ENCODE measurements at regions of chr5 and their contacts with region 1.

Region 1: GRCh38 chr5:153974131-153974812 is 64.4 kb downstream of the FAM114A2 start:
- DNase-seq: peak; percentile 38 to 60 (median 48)
- ATAC-seq: peak; percentile 78
- H3K4me3 ChIP-seq: no peak overlapping the region
- H3K27ac ChIP-seq: no peak overlapping the region
- H3K4me1 ChIP-seq: peaks cover 0 to 27% of the 10 kb centered on the region in 2 experiments; a peak in 3 of 5 replicates
- H3K27me3 ChIP-seq: peaks cover 1 to 3% of the 10 kb centered on the region in 2 experiments; a peak in 2 of 5 replicates
- CTCF ChIP-seq: peak; percentile 62 to 92 (median 76)
- EP300 ChIP-seq: no peak
- POLR2A ChIP-seq: no peak
- RAD21 ChIP-seq: peak; percentile 85 to 90

Region 2: DNA sequence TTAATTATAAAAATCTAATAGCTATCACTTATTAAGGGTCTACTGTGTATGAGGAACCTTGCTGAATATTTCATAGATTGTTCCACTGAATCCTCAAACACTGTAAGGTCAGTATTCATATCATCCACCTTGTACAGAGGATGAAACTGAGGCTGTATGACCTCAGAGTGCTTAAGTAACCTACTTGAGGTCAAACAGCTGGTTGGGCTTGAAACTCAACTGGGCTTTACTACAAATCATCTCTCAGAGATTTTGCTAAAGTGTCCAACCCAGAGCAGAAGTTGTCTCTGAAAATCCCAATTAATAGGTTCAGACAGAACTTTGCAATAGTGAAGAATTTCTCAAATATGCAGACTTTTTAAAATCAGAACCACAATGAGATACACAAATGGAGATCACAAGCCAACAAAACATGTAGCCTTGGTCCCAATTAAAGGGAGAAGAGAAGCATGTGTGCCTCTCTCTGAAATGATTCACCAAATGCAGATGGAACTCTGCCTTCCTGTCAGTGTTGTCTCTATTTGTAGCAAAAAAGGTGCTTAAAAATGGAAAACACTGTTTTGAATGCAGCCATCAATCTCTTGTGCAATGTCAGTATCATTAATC is 67.0 kb before region 1 on chr5:
- CTCF ChIA-PET with region 1: no interaction called
- POLR2A ChIA-PET with region 1: no interaction called
- in situ Hi-C with region 1: no loop called
- intact Hi-C with region 1: no loop called
- DNase-seq: no peak
- ATAC-seq: no peak
- H3K4me3 ChIP-seq: no peak overlapping the region
- H3K27ac ChIP-seq: no peak overlapping the region
- H3K4me1 ChIP-seq: no peaks in the 10 kb centered on the region
- H3K27me3 ChIP-seq: no peaks in the 10 kb centered on the region
- CTCF ChIP-seq: no peak
- EP300 ChIP-seq: no peak
- POLR2A ChIP-seq: no peak
- RAD21 ChIP-seq: no peak

Region 3: DNA sequence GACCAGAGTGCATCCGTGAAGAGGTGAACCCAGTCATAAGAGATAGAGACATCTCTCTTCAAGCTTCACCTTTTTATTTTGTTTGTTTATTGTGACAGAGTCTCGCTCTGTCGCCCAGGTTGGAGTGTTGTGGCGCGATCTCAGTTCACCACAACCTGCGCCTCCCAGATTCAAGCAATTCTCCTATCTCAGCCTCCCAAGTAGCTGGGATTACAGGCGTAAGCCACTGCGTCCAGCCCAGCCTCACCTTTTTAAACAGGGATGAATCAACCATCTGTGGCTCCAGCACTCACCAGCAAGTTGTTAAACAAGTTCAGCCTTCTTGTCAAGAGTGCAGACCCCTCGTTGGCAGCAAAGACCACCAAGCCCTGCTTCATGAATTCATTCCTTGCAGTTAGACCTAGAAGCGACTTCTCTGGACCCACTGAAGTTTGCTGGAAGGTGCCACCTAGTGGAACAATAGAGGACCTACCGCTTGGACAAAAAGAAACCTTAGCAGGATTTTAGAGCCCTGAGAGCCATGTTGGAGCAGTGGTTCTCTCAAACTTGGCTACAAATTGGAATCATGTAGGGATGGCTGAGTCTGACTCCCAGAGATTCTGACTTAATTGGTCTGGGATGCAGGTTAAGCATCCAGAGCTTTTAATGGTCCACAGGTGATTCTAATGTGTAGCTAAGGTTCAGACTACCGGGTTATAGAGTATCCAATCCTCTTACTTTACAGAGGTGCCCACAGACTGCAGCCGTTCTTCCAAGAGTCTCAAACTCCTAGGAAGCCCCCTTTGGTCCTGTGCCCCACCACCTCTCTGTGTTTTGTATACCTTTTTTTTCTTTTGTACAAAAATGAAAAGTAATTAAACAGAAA is 205.8 kb after region 1 on chr5:
- CTCF ChIA-PET with region 1: interaction called, 7 read pairs
- POLR2A ChIA-PET with region 1: interaction called, 3 read pairs
- in situ Hi-C with region 1: no loop called
- intact Hi-C with region 1: loop called (anchors 1 kb)
- DNase-seq: peak; percentile 62 to 67 (median 65)
- ATAC-seq: peak; percentile 98
- H3K4me3 ChIP-seq: no peak overlapping the region
- H3K27ac ChIP-seq: no peak overlapping the region
- H3K4me1 ChIP-seq: no peaks in the 10 kb centered on the region
- H3K27me3 ChIP-seq: peaks cover 5 to 21% of the 10 kb centered on the region in 2 experiments
- CTCF ChIP-seq: peak; percentile 79 to 82 (median 80)
- EP300 ChIP-seq: no peak
- POLR2A ChIP-seq: no peak
- RAD21 ChIP-seq: peak; percentile 76 to 79

Region 4: GRCh38 chr5:154405078-154405792 is 431.0 kb after region 1 on chr5:
- CTCF ChIA-PET with region 1: interaction called, 13 read pairs
- POLR2A ChIA-PET with region 1: no interaction called
- in situ Hi-C with region 1: no loop called
- intact Hi-C with region 1: loop called (anchors 1 kb)
- DNase-seq: peak; percentile 82 to 87 (median 86)
- ATAC-seq: peak; percentile 99
- H3K4me3 ChIP-seq: no peak overlapping the region
- H3K27ac ChIP-seq: no peak overlapping the region
- H3K4me1 ChIP-seq: peaks cover 0 to 9% of the 10 kb centered on the region in 2 experiments; a peak in 3 of 5 replicates
- H3K27me3 ChIP-seq: no peaks in the 10 kb centered on the region
- CTCF ChIP-seq: peak; percentile 84 to 93 (median 91)
- EP300 ChIP-seq: no peak
- POLR2A ChIP-seq: no peak
- RAD21 ChIP-seq: peak; percentile 91 to 94

Region 5: GRCh38 chr5:154467655-154468354 is 493.5 kb after region 1 on chr5:
- CTCF ChIA-PET with region 1: no interaction called
- POLR2A ChIA-PET with region 1: no interaction called
- in situ Hi-C with region 1: no loop called
- intact Hi-C with region 1: loop called (anchors 5 kb)
- DNase-seq: peak; percentile 80 to 88 (median 87)
- ATAC-seq: peak; percentile 99
- H3K4me3 ChIP-seq: no peak overlapping the region
- H3K27ac ChIP-seq: no peak overlapping the region
- H3K4me1 ChIP-seq: no peaks in the 10 kb centered on the region
- H3K27me3 ChIP-seq: peaks cover 17% of the 10 kb centered on the region in 2 experiments
- CTCF ChIP-seq: peak; percentile 88 to 91 (median 89)
- EP300 ChIP-seq: no peak
- POLR2A ChIP-seq: no peak
- RAD21 ChIP-seq: peak; percentile 79 to 88

Measured in K562 (cell line).